ENCODE measurements at regions of chr15 and their contacts with region 1.

Region 1: DNA sequence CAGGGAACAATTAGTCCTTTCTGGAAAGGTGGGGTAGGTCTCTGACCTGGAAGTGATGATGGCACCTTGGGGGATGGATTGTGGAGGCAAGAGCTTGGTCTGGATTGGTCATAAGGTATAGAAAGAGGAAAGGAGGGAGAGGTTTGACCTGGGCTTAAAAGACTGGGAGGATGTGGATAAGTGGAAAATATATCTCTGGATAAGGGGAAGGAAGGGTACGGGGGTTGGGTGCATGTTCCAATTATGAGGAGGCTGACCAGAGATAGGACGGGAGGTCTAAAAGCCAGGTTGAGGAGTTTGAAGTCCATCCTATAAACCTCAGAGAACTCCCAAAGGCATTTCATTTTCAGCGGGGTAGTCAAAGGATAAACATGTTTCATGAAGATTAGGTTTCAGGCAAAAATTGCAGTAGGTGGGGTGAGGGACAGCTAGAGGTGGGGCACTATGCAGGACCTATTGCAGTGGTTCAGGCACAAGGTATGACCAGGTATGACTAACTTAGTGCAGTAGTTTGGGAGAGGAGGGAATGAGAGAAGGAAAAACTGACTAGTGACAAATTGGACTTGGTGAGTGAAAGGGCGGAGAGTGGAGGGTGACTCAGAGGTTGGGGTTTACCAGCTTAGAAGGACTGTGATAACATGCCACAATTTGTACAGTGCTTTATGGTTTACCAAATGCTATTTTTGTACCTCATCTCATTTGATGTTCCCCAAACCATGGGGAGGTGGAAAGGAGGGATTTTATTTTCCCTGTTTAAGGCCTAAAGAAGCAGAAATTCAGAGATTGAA is 10.7 kb downstream of the PDE8A start:
- DNase-seq: peak; percentile 42
- H3K4me3 Mint-ChIP-seq: no peak overlapping the region
- H3K27ac Mint-ChIP-seq: peak overlapping the region; percentile 6
- H3K4me1 Mint-ChIP-seq: peaks cover 47% of the 10 kb centered on the region
- H3K27me3 Mint-ChIP-seq: no peaks in the 10 kb centered on the region

Region 2: DNA sequence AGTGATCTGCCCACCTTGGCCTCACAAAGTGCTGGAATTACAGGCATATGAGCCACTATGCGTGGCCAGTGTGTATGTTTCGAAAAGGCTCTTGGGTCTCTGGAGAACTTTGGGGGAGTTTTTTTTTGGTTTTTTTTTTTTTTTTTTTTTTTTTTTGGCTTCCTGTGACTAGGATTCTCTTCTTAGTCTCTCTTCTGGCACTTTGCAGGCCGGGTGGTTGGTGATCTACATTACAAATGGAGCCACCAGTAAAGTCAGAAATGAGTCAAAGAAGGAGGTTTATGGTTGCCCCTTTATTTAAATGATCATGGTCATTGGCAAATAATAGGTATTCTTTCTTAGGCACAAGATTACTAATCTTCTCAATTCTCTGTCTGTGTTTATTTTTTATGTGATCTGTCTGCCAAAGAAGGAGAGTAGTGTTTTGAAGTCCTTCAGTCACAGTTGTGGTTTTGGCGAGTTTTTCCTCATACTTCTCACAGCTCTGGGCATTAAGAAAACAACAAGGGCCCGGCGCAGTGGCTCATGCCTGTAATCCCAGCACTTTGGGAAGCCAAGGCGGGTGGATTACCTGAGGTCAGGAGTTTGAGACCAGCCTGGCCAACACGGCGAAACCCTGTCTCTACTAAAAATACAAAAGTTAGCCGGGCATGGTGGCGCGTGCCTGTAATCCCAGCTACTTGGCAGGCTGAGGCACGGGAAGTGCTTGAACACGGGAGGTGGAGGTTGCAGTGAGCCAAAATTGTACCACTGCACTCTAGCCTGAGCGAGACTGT is 27.7 kb after region 1 on chr15:
- CTCF ChIA-PET with region 1: no interaction called
- POLR2A ChIA-PET with region 1: no interaction called
- DNase-seq: no peak
- H3K4me3 Mint-ChIP-seq: no peak overlapping the region
- H3K27ac Mint-ChIP-seq: no peak overlapping the region
- H3K4me1 Mint-ChIP-seq: peaks cover 22% of the 10 kb centered on the region
- H3K27me3 Mint-ChIP-seq: no peaks in the 10 kb centered on the region

Region 3: GRCh38 chr15:85030301-85031049 is 38.1 kb after region 1 on chr15:
- CTCF ChIA-PET with region 1: interaction called, 4 read pairs
- POLR2A ChIA-PET with region 1: interaction called, 14 read pairs
- DNase-seq: no peak
- H3K4me3 Mint-ChIP-seq: no peak overlapping the region
- H3K27ac Mint-ChIP-seq: peak overlapping the region; percentile 20
- H3K4me1 Mint-ChIP-seq: peaks cover 51% of the 10 kb centered on the region
- H3K27me3 Mint-ChIP-seq: no peaks in the 10 kb centered on the region

Region 4: DNA sequence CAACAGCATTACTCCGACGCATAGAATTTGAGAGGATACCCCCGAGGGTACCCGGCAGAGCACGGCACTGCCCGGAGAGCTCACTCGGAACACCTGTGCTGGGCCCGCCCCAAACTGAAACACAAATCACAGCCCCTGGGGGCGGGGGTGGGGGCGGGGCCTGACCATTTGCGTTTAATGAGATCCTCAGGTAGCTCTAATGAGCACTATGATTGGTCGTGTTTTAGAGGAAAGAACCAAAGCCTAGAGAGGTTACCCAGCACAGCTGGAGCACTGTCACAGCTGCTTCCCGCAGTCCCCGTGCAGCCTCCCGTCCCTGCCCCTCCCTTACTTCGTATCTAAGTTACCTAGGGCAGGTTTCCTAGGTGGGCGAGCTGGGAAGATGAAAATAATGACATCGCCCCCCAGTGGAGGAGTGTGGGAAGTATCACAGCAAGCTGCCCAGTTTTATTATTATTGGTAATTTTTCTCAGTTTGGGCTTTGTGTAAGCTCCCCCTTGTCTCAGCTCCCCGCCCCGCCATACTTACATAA is 176.4 kb after region 1 on chr15:
- CTCF ChIA-PET with region 1: no interaction called
- POLR2A ChIA-PET with region 1: no interaction called
- DNase-seq: peak; percentile 30
- H3K4me3 Mint-ChIP-seq: no peak overlapping the region
- H3K27ac Mint-ChIP-seq: no peak overlapping the region
- H3K4me1 Mint-ChIP-seq: peaks cover 1% of the 10 kb centered on the region
- H3K27me3 Mint-ChIP-seq: peaks cover 38% of the 10 kb centered on the region

Measured in activated CD4-positive, alpha-beta memory T cell treated with anti-CD3 and anti-CD28 coated beads, Interleukin-2, amount 10 ng/mL, durations not matched to agents 7 days and 5 days (primary cell).